HEK293T (cell line): ENCODE measurements at regions of chr5 and their contacts with region 1.

Region 1: DNA sequence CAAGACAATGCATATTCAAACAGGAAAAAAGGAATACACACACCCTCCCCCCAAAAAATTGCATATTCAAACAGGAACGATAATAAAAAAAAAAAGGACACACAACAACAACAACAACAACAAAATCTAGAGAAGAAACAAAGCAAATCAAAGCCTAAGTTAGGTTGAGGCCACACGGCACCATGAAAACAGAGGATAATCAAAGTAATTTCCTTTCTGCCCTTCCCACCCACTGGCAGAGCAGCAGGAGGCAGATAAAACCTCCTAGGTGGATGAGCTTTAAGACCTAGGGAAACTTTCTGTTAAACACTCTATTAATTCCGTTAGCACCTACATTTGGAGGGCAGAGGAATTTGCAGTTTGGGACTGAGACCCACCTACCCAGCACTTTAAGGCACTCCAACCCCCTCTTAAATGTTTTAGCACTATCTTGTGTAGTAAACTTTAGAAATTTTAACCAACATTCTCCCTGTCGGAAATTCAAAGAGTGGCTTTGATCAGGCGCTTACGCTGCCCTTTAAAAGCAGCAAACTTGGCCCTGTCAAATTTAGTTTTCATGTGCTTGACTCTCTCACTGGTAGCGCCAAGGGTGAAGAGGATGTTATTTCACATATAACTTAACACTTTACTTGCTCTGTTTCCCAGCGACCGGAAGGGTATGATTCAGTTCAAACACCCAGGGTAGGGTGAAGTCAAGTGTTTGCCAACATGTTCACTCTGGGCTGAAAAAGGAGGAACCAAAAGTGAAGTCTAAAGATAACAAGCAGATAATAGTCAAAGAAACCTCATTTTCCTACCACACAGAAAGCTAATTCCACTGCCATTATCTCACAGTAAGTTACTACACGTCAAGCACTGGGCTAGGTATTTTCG is 9.2 kb downstream of the ENC1 start:
- DNase-seq: no peak

Region 2: DNA sequence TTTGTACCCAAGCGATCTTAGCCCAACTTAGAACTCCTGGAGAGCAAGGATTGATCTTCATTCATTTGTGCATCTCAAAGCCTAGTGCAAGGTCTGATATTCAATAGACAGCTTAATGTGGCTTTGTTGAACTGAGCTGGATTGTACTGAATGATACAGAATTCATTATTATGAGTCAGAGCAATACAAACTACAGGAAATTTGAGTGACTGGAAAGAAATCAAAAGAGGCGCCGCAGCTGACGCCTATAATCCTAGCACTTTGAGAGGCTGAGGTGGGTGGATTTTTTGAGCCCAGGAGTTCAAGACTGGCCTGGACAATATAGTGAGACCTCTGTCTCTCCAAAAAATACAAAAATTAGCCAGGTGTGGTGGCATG is 49.3 kb before region 1 on chr5:
- CTCF ChIA-PET with region 1: no interaction called
- POLR2A ChIA-PET with region 1: no interaction called
- DNase-seq: no peak

Region 3: DNA sequence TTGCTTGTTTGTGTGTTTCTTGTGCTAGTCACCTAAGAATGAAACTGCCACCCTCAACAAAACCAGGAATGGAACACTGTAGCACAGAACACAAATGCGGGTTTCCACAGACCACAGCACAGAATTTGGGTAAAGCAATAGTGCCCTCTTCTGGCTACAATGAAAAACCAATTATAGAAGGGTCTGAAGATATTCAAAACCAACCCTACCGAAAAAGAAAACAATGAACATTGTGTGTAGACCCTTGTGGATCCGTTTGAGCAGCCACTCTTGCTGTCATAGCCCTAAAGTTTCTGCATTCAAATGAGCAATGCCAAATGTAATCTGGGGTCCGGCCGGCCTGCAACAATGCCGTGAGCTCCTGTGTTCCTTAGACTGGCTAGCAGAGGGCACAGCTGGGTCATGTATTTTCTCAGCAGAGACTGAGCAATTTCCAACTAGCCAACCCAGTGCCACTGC is 17.5 kb after region 1 on chr5:
- CTCF ChIA-PET with region 1: no interaction called
- POLR2A ChIA-PET with region 1: no interaction called
- DNase-seq: peak; percentile 69

Region 4: DNA sequence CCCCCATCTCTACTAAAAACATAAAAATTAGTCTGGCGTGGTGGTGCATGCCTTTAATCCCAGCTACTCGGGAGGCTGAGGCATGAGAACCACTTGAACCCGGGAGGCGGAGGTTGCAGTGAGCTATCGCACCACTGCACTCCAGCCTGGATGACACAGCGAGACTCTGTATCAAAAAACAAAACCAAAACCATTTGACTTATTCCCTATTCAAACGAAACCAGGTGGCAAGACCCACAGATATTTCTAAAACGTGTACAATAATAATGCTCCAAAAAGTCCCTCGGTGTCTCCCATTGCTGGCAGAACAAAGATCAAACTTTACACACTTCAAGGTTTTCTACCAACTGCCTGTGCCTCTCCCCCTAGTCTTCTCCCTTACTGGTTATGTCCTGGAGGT is 735.5 kb after region 1 on chr5:
- CTCF ChIA-PET with region 1: interaction called, 12 read pairs
- POLR2A ChIA-PET with region 1: no interaction called
- DNase-seq: no peak